MCF 10A (cell line): ENCODE measurements at regions of chr2 and their contacts with region 1.

Region 1: GRCh38 chr2:177164584-177165052 is 48.0 kb upstream of the HNRNPA3 start:
- DNase-seq: peak; percentile 90
- H3K4me3 Mint-ChIP-seq: no peak overlapping the region
- H3K27ac Mint-ChIP-seq: no peak overlapping the region
- H3K4me1 Mint-ChIP-seq: peaks cover 17% of the 10 kb centered on the region
- H3K27me3 Mint-ChIP-seq: no peaks in the 10 kb centered on the region
- CTCF ChIP-seq: peak; percentile 97

Region 2: GRCh38 chr2:176662753-176663152 is 501.9 kb before region 1 on chr2:
- CTCF ChIA-PET with region 1: no interaction called
- POLR2A ChIA-PET with region 1: no interaction called
- intact Hi-C with region 1: no loop called
- DNase-seq: no peak
- H3K4me3 Mint-ChIP-seq: no peak overlapping the region
- H3K27ac Mint-ChIP-seq: no peak overlapping the region
- H3K4me1 Mint-ChIP-seq: peaks cover 5% of the 10 kb centered on the region
- H3K27me3 Mint-ChIP-seq: peaks cover 4% of the 10 kb centered on the region
- CTCF ChIP-seq: no peak

Region 3: DNA sequence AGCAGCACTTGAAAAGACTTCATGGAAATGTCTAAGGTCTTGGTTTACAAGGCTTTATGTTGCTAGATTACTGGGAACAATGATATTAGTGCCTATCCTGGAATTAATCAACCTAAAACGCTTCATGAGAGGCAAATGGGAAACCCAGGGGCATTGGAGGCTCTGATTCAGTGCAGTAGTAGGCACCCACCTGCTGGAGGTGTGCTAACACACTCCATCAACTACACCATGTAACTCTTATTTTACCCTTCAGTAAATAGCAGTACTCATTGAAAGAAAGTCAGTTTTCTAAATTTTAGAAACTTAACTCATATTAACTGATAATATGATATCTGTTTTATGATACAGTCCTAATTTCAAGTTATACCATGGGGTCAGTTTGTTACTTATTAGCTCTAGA is 30.6 kb after region 1 on chr2:
- CTCF ChIA-PET with region 1: interaction called, 10 read pairs
- POLR2A ChIA-PET with region 1: interaction called, 11 read pairs
- intact Hi-C with region 1: no loop called
- DNase-seq: no peak
- H3K4me3 Mint-ChIP-seq: no peak overlapping the region
- H3K27ac Mint-ChIP-seq: no peak overlapping the region
- H3K4me1 Mint-ChIP-seq: peaks cover 6% of the 10 kb centered on the region
- H3K27me3 Mint-ChIP-seq: no peaks in the 10 kb centered on the region
- CTCF ChIP-seq: no peak

Region 4: DNA sequence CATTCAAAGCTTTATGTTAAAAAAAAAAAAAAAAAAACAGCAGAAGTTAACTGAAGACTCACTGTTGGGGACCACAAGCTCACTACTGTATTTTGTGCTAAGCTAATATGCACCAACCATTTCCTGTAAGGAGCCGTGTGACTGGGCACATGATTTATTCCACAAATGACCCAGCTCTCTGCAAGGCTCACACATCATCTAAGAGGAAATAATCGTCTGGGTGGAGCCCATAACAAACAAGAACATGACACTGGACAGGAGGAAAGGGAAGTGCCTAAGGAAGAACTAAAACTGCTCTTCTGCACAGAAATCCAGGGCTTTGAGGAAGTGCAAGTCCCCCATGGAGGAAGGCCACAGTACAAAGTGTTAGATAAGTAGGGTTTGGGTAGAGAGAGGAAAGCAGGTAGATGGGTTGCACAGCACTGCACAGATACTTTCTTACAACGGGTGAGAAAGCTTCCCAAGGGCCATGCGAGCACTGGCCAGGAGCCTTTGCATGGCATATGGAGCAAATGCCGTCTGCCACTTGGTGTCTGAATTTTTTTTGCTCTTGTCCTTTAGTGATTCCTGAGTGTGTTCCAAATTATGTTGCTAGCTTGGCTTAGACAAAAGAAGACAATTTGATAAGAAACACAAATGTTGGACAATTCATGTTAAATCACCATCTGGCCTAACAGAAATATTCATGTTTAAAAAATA is 75.5 kb after region 1 on chr2:
- CTCF ChIA-PET with region 1: interaction called, 16 read pairs
- POLR2A ChIA-PET with region 1: interaction called, 9 read pairs
- intact Hi-C with region 1: no loop called
- DNase-seq: peak; percentile 28
- H3K4me3 Mint-ChIP-seq: peak overlapping the region; percentile 30
- H3K27ac Mint-ChIP-seq: peak overlapping the region; percentile 97
- H3K4me1 Mint-ChIP-seq: peaks cover 53% of the 10 kb centered on the region
- H3K27me3 Mint-ChIP-seq: no peaks in the 10 kb centered on the region
- CTCF ChIP-seq: no peak

Region 5: DNA sequence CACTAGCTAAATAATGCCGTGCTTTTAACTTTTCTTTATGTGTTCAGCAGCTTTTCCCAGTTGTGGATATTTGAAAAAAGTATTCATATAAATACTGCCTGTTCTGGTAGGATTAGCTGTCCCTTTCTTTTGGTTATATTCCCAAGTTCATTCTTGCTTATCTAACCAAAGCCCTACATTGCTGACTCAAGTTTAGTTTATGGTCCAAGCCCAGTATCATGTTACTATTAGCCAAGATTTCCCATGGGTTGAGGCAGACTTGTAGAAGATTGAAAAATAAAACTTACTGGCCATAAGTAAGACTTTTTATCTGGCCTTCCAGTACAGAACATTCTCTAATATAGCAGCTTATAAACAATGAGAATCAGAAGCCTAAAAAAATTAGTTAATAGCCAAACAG is 149.6 kb after region 1 on chr2:
- CTCF ChIA-PET with region 1: interaction called, 20 read pairs
- POLR2A ChIA-PET with region 1: interaction called, 26 read pairs
- intact Hi-C with region 1: no loop called
- DNase-seq: peak; percentile 67
- H3K4me3 Mint-ChIP-seq: no peak overlapping the region
- H3K27ac Mint-ChIP-seq: peak overlapping the region; percentile 95
- H3K4me1 Mint-ChIP-seq: peaks cover 30% of the 10 kb centered on the region
- H3K27me3 Mint-ChIP-seq: no peaks in the 10 kb centered on the region
- CTCF ChIP-seq: no peak

Region 6: DNA sequence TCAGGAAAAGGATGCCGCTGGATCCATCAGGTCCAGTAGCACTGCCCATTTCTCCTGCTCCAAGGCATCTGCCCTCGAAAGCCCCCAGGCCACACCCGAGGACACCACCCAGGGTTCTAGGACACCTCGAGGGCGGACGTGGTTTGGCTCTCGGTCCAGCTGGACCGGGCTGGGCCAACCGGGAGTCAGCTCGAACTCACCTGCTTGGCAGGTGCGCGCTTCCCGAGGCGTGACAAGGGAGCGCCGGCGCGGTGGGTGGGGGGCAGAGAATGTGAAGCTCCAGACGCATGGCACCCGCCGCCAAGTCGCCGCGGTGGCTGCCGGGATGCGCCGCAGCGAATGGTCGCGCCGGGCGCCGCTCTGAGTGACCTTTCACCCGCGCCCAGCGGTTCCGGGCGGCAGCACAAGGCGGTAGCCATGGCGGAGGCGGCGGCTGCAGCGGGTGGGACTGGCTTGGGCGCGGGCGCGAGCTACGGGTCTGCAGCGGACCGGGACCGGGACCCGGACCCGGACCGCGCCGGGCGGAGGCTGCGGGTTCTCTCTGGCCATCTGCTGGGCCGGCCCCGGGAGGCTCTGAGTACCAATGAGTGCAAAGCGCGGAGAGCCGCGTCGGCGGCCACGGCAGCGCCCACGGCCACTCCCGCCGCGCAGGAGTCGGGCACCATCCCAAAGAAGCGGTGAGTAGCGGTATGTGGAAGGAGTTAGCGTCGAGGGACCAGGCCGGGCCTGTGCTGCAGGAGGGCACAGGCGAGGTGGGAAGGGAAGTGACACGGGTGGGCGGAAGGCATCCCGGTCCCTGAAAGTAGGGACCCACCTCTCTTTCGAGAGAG is 228.0 kb after region 1 on chr2 and contains the start of gene AGPS:
- CTCF ChIA-PET with region 1: interaction called, 8 read pairs
- POLR2A ChIA-PET with region 1: interaction called, 10 read pairs
- intact Hi-C with region 1: no loop called
- DNase-seq: peak; percentile 71
- H3K4me3 Mint-ChIP-seq: peak within 1 kb of the TSS; percentile 96
- H3K27ac Mint-ChIP-seq: peak within 1 kb of the TSS; percentile 97
- H3K4me1 Mint-ChIP-seq: peaks cover 48% of the 10 kb centered on the region
- H3K27me3 Mint-ChIP-seq: no peaks in the 10 kb centered on the region
- CTCF ChIP-seq: peak; percentile 14
- total RNA-seq, gene AGPS: 49.5 and 50.5 TPM in 2 replicates